Activated CD8-positive, alpha-beta T cell treated with anti-CD3 and anti-CD28 coated beads for 36 hours (primary cell): ENCODE measurements at regions of chr1 and their contacts with region 1.

Region 1: DNA sequence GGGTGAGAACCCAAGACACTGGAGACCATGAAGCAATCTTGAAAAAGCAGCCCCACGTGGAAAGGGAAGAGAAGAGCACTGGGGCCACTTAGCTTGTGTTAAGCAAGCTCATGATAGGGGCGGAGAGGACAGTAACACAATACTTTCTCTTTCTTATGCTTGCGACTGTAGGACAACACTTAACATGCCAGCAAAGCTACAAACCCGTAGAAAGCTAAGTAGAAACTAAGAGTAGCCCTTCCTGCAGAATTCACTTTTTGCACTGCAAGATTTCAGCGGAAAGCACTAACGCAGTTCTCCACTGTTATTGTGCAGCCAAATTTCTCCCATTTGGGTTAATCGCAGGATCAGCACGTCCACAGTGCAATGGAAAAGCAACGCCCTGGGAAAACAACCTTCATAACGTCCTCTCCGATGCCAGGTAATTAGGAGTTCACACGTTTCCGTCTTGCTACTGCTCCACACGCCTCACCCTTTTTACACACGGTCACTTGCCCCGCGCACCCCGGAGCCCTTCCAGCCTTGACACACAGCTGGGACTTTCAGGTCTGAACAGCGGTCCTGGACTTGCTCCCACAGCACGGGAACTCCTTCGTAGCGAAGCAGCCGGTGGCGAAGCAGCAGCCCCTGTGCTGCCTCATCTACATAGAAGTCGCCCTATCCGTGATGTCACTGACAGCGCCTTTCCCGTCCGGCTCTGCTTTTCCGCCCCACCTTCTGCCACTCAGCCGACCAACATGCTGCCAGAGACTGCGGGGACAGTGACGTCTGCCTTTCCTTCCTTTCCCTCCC is 148.6 kb downstream of the PPIAL4G start:
- DNase-seq: peak; percentile 87
- ATAC-seq: peak; percentile 86
- H3K4me3 Mint-ChIP-seq: peak overlapping the region; percentile 85
- H3K27ac Mint-ChIP-seq: peak overlapping the region; percentile 100
- H3K4me1 Mint-ChIP-seq: peaks cover 28% of the 10 kb centered on the region
- H3K27me3 Mint-ChIP-seq: peaks cover 9% of the 10 kb centered on the region
- CTCF ChIP-seq: no peak

Region 2: DNA sequence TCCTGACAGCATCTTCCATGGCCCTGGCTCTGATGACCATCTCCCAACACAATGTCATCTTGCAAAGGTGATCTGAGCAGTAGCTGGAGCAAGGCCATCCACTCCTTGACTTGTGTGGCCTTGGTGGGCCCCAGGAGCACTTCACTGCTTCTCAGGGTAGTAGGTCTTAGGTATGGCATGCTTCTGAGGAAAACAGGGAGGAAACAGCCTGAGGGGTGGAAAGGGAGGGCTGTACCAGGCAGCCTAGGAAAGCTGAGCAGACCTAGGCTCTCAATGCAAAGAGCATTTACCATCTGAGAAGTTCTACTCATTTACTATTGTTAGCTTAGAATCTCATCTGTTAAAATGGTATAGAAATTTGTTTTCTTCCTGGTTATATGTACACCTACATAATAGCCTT is 61.6 kb before region 1 on chr1:
- CTCF ChIA-PET with region 1: no interaction called
- POLR2A ChIA-PET with region 1: interaction called, 14 read pairs
- intact Hi-C with region 1: no loop called
- DNase-seq: no peak
- ATAC-seq: no peak
- H3K4me3 Mint-ChIP-seq: no peak overlapping the region
- H3K27ac Mint-ChIP-seq: no peak overlapping the region
- H3K4me1 Mint-ChIP-seq: no peaks in the 10 kb centered on the region
- H3K27me3 Mint-ChIP-seq: peaks cover 28% of the 10 kb centered on the region
- CTCF ChIP-seq: no peak

Region 3: DNA sequence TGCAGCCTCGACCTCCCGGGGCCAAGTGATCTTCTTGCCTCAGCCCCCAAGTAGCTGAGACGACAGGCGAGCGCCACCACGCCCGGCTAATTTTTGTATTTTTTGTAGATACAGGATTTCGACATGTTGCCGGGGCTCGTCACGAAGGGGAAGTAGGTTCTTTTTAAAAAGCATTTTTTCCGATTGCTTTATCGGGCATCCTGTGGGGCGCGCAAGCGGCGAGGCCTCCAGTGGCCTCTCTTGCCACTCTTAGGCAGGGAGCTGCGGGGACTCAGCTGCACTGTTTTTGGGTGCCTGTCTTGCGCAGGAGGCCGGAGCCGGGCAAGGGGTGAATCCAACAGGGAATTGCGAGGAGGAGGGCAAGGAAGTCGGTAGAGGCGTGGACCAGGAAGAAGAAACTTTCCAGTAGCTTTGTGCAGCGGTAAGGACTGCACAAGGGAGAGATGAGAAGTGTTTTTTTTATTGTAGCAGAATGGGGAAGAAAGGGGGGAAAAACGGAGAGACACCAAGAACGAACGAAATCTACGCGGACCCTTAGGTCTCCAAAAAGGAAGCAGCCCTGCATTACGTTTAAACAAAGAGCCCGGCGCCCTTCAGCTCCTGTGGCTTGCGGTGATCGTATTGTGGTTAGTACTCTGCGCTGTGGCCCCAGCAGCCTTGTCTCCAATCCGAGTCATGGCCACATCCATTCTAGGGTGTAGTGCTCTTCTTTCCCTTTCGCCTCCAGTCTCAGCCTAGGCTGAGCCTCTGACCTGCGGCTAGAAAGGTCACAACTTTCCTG is 16.2 kb before region 1 on chr1:
- CTCF ChIA-PET with region 1: no interaction called
- POLR2A ChIA-PET with region 1: interaction called, 28 read pairs
- intact Hi-C with region 1: no loop called
- DNase-seq: peak; percentile 90
- ATAC-seq: peak; percentile 85
- H3K4me3 Mint-ChIP-seq: peak overlapping the region; percentile 73
- H3K27ac Mint-ChIP-seq: peak overlapping the region; percentile 85
- H3K4me1 Mint-ChIP-seq: peaks cover 31% of the 10 kb centered on the region
- H3K27me3 Mint-ChIP-seq: peaks cover 23% of the 10 kb centered on the region
- CTCF ChIP-seq: no peak

Region 4: DNA sequence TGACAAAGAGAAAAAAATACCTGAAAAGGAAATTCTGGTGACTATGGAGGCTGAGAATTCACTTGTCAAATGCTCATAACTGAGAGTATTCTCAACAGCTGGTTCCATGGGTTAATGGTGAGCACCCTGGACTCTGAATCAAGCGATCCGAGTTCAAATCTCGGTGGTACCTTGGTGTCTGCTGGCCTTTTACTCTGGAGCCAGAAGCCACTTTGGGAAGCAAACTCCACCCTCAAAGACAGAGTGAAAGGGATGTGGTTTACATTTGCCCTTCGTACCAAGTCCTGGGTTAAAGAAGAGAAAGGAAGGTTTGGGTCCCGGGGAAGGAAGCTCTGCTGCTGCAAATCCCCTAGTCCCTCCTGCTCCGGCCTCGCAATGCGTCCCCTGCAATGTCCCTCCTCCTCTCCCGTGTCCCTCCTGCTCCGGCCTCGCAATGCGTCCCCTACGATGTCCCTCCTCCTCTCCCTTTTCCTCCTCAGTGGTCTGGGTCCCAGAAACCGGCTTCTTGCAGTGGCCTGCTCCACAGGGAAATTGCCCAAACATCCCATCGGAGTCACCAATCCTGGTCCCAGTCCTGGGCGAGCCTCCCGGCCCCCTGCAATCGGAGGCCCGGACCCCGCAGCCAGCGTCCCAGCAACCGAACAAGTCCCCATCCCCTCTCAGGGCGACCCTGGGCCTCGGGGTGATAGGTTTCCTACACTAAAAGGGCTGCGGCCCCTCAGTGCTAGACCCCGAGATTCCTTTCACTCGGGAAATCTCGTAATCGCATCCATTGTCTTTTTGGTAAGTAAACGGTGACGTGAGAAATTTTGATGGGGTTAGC is 19.1 kb after region 1 on chr1:
- CTCF ChIA-PET with region 1: interaction called, 4 read pairs
- POLR2A ChIA-PET with region 1: interaction called, 23 read pairs
- intact Hi-C with region 1: no loop called
- DNase-seq: peak; percentile 51
- ATAC-seq: peak; percentile 83
- H3K4me3 Mint-ChIP-seq: no peak overlapping the region
- H3K27ac Mint-ChIP-seq: no peak overlapping the region
- H3K4me1 Mint-ChIP-seq: peaks cover 7% of the 10 kb centered on the region
- H3K27me3 Mint-ChIP-seq: peaks cover 37% of the 10 kb centered on the region
- CTCF ChIP-seq: no peak

Region 5: DNA sequence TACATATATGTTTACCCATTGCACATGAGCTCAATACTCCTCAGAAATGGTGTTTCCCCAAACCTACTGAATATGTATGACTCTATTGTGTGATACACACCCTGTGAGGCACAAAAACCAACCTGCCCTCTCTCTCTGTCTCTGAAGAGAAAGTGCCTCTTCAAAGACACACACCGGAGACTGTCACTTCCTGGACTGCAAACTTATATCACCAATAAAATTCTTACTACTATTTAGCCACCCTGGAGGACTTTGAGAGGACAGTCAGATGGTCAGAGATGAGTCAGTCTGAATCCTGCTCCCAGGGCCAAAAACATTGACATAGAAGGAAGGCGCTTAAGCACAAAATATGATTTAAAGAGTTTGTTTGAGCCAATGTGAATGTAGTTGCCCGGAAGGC is 38.2 kb after region 1 on chr1:
- CTCF ChIA-PET with region 1: interaction called, 3 read pairs
- POLR2A ChIA-PET with region 1: interaction called, 16 read pairs
- intact Hi-C with region 1: no loop called
- DNase-seq: peak; percentile 74
- ATAC-seq: peak; percentile 74
- H3K4me3 Mint-ChIP-seq: peak overlapping the region; percentile 37
- H3K27ac Mint-ChIP-seq: peak overlapping the region; percentile 92
- H3K4me1 Mint-ChIP-seq: peaks cover 44% of the 10 kb centered on the region
- H3K27me3 Mint-ChIP-seq: no peaks in the 10 kb centered on the region
- CTCF ChIP-seq: no peak